AG04450 (cell line): ENCODE measurements at regions of chr3 and their contacts with region 1.

Region 1: GRCh38 chr3:15268033-15268631 is 62.1 kb downstream of the CAPN7 start:
- DNase-seq: peak; percentile 61
- H3K4me3 ChIP-seq: no peak overlapping the region
- H3K27ac ChIP-seq: no peak overlapping the region
- H3K27me3 ChIP-seq: no peaks in the 10 kb centered on the region
- CTCF ChIP-seq: peak; percentile 97

Region 2: DNA sequence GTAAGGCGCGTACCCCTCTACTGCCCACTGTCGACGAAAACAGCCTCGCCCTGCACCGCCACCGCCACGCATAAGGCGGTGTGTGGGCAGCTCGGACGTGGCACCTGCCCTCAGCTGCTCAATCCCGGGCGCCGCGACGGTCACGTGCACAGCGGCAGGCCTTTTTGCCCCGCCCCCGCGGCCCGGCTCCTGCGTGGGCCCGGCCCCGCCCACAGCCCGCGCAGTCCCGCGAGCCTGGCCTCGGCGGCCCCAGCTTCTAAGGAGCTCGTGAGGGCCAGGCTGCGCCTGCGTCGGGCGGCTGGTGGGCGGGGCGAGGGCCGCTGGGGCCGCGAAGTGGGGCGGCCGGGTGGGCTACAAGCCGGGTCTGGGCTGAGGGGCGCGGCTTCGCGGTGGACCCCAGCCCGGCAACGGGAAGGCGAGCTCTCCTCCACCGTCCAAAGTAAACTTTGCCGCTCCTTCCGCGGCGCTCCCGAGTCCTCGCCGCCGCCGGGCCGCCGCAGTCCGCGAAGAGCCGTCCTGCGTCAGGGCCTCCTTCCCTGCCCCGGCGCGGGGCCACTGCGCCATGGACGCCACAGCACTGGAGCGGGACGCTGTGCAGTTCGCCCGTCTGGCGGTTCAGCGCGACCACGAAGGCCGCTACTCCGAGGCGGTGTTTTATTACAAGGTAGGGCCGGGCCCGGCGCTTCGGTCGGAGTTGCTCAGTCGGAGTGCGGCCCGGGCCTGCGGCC is 62.0 kb before region 1 on chr3 and contains the start of gene CAPN7:
- CTCF ChIA-PET with region 1: interaction called, 26 read pairs
- POLR2A ChIA-PET with region 1: interaction called, 9 read pairs
- DNase-seq: peak; percentile 83
- H3K4me3 ChIP-seq: peak within 1 kb of the TSS; percentile 92
- H3K27ac ChIP-seq: peak within 1 kb of the TSS; percentile 75
- H3K27me3 ChIP-seq: no peaks in the 10 kb centered on the region
- CTCF ChIP-seq: peak; percentile 65
- polyA plus RNA-seq, gene CAPN7: 21.8 and 29.0 TPM in 2 replicates

Region 3: DNA sequence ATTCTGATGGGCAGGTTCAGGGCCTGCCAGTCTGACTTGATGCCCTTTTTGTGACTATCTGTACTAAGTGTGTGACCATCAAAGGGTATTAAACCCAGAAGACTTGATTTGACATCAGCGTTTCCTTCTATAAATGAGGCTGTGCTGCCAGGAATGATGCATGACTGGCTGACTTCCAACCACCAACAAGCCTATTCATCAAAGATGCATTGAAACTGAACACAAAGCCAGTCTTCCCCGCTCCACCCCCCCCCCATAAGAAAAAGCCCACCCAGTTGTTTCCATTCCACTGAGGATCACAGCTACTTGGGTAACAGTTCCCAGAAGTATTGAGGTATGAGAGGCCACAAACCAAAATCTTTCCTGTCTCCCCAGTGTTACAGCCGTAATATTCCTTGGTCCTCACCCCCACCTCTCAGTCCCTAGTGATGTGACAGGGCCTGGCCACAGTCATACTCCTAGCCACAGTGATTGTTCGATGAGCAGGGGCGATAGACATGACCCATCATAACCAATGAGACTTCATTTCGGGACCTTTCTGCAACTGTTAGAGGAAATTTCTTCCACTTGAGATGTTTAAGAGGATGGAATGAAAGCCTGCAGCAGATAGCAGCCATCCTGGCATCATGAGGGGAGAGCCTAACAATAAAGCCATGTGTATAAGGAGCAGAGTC is 41.7 kb after region 1 on chr3:
- CTCF ChIA-PET with region 1: interaction called, 10 read pairs
- POLR2A ChIA-PET with region 1: no interaction called
- DNase-seq: no peak
- H3K4me3 ChIP-seq: no peak overlapping the region
- H3K27ac ChIP-seq: peak overlapping the region; percentile 61
- H3K27me3 ChIP-seq: no peaks in the 10 kb centered on the region
- CTCF ChIP-seq: no peak

Region 4: DNA sequence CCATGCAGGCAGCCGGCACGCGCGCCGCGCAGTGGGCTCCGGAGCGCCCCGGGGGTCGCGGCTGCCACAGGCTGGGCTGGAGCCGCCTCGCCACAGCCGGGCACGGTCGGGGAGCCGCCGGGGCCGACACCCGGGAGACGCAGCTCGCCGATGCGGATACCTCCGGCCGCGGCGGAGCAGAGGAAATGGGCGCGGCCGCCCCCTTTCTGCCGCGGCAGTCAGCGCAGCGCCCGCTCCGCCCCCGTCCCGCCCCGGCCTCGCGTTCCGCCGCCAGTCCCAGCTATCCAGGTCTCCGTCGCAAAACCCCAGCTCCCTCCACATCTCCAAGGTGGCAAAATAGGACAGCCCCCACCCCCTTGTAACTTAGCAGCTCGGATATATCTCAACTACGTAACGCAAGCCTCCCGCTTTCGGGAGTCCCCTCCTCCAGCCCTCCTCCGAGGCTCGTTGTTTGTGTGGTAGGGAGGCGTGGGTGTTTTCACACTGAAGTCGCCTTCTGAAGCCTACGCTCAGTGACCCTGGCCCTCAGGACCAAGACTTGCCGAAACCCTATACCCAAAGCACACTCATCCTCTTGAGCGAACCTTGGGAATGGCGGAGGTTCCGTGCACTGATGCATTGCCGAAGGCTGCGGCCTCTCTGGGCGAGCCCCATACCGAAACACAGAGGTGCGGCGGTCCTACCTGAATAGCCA is 64.4 kb after region 1 on chr3 and contains the start of gene SH3BP5:
- CTCF ChIA-PET with region 1: interaction called, 75 read pairs
- POLR2A ChIA-PET with region 1: no interaction called
- DNase-seq: no peak
- H3K4me3 ChIP-seq: peak within 1 kb of the TSS; percentile 87
- H3K27ac ChIP-seq: no peak within 1 kb of the TSS
- H3K27me3 ChIP-seq: no peaks in the 10 kb centered on the region
- CTCF ChIP-seq: peak; percentile 56
- polyA plus RNA-seq, gene SH3BP5: 15.5 and 16.6 TPM in 2 replicates

Region 5: DNA sequence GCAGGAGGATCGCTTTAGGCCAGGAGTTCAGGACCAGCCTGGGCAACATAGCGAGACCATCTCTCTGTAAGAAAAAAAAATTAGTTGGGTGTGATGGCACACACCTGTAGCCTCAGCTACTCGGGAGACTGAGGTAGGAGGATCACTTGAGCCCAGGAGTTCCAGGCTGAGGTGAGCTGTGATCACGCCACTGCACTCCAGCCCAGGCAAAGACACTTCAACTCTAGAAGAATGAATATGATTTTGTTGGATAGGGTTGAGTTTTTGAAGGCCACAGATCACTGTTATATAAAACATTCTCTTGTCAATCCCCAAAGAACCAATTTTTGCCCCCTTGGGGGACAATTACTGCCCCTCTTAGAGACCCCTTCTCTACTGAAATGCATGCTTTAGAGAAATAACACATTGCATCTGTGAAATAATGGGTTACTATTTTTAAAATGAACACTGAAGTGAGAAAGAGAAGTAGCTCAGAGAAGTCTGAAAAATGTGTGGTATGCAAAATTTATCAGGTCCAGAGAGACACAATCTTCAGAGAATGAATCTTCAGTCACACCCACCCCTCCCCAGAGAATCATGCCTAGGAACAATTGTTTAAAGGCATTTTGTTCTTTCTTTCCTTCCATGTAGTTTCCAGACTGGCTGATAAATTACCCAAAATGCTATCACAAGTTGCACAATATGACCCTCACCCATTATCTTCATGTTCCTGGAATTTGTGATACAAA is 116.5 kb after region 1 on chr3:
- CTCF ChIA-PET with region 1: interaction called, 110 read pairs
- POLR2A ChIA-PET with region 1: no interaction called
- DNase-seq: no peak
- H3K4me3 ChIP-seq: no peak overlapping the region
- H3K27ac ChIP-seq: no peak overlapping the region
- H3K27me3 ChIP-seq: no peaks in the 10 kb centered on the region
- CTCF ChIP-seq: no peak

Region 6: DNA sequence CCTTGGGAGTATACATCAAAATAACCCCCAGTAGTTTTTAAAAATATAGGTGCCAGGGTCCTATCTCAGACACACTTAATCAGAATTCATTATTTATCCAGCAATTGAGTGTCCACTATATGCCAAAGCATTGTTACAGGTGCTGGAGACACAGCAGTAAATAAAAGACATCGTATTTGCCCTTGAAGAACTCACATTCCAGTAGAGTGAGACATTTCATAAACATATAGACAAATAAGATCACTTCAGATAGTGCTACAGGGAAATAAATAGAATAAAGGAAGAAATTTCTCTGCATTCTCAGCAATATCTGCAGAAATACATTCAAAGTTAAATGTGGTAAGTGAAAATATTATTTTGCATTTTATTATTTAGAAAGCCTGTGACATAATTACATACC is 563.8 kb after region 1 on chr3:
- CTCF ChIA-PET with region 1: no interaction called
- POLR2A ChIA-PET with region 1: no interaction called
- DNase-seq: no peak
- H3K4me3 ChIP-seq: no peak overlapping the region
- H3K27ac ChIP-seq: no peak overlapping the region
- H3K27me3 ChIP-seq: no peaks in the 10 kb centered on the region
- CTCF ChIP-seq: no peak